ENCODE measurements at regions of chr9 and their contacts with region 1.

Region 1: DNA sequence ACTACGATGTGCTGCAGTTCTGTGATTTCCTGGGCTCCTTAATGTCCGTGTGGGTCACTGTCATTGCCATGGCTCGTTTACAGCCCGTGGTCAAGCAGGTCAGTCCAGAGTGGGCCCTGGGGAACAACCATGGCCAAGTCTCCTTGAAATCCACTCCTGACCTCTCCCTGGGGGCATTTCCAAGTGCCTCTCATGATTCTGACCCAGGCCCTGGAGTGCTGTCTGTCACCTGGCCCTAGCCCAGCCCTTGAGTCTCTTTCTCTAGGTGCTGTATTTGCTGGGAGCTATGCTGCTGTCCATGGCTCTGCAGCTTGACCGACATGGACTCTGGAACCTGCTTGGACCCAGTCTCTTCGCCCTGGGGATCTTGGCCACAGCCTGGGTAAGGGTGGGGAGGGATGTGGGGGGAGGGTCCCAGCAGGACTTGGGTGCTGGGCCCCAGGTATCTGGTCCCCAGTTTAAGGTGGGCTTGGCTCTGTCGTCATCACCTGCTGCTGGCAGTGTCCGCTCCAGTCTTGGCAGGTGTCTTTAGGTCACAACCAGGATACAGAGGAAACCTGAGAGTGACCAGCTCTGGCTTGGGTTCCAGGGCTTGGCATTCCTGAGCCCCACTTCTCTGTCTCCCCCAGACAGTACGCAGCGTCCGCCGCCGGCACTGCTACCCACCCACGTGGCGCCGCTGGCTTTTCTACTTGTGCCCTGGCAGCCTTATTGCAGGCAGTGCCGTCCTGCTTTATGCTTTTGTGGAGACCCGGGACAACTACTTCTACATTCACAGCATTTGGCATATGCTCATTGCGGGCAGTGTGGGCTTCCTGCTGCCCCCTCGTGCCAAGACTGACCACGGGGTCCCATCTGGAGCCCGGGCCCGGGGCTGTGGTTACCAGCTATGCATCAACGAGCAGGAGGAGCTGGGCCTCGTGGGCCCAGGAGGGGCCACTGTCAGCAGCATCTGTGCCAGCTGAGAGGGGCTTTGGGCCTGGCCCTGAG is 17.0 kb downstream of the OR13J1 start:
- DNase-seq: no peak
- ATAC-seq: no peak
- H3K4me3 Mint-ChIP-seq: no peak overlapping the region
- H3K27ac Mint-ChIP-seq: no peak overlapping the region
- H3K4me1 Mint-ChIP-seq: peaks cover 3% of the 10 kb centered on the region
- H3K27me3 Mint-ChIP-seq: no peaks in the 10 kb centered on the region

Region 2: GRCh38 chr9:35842795-35843194 is 10.4 kb before region 1 on chr9:
- CTCF ChIA-PET with region 1: no interaction called
- POLR2A ChIA-PET with region 1: no interaction called
- intact Hi-C with region 1: no loop called
- DNase-seq: no peak
- ATAC-seq: no peak
- H3K4me3 Mint-ChIP-seq: no peak overlapping the region
- H3K27ac Mint-ChIP-seq: no peak overlapping the region
- H3K4me1 Mint-ChIP-seq: peaks cover 22% of the 10 kb centered on the region
- H3K27me3 Mint-ChIP-seq: no peaks in the 10 kb centered on the region

Region 3: GRCh38 chr9:35891646-35892045 is 38.5 kb after region 1 on chr9:
- CTCF ChIA-PET with region 1: interaction called, 3 read pairs
- POLR2A ChIA-PET with region 1: no interaction called
- intact Hi-C with region 1: loop called in 1 of 2 experiments (anchors 5 kb)
- DNase-seq: no peak
- ATAC-seq: no peak
- H3K4me3 Mint-ChIP-seq: no peak overlapping the region
- H3K27ac Mint-ChIP-seq: no peak overlapping the region
- H3K4me1 Mint-ChIP-seq: no peaks in the 10 kb centered on the region
- H3K27me3 Mint-ChIP-seq: peaks cover 7% of the 10 kb centered on the region

Measured in activated CD4-positive, alpha-beta T cell treated with anti-CD3 and anti-CD28 coated beads for 36 hours (primary cell).